Activated CD4-positive, alpha-beta T cell treated with anti-CD3 and anti-CD28 coated beads, Interleukin-2, amount 10 ng/mL, durations not matched to agents 24 days and 14 days (primary cell): ENCODE measurements at regions of chr5 and their contacts with region 1.

Region 1: GRCh38 chr5:66171349-66172344 is 27.5 kb downstream of the SREK1 start:
- DNase-seq: peak; percentile 84
- H3K4me3 Mint-ChIP-seq: no peak overlapping the region
- H3K27ac Mint-ChIP-seq: no peak overlapping the region
- H3K4me1 Mint-ChIP-seq: peaks cover 13% of the 10 kb centered on the region
- H3K27me3 Mint-ChIP-seq: no peaks in the 10 kb centered on the region

Region 2: GRCh38 chr5:65663804-65664521 is 507.7 kb before region 1 on chr5:
- intact Hi-C with region 1: no loop called
- DNase-seq: no peak
- H3K4me3 Mint-ChIP-seq: no peak overlapping the region
- H3K27ac Mint-ChIP-seq: no peak overlapping the region
- H3K4me1 Mint-ChIP-seq: no peaks in the 10 kb centered on the region
- H3K27me3 Mint-ChIP-seq: no peaks in the 10 kb centered on the region

Region 3: GRCh38 chr5:65774346-65774745 is 397.3 kb before region 1 on chr5:
- intact Hi-C with region 1: loop called (anchors 10 kb)
- DNase-seq: peak; percentile 65
- H3K4me3 Mint-ChIP-seq: no peak overlapping the region
- H3K27ac Mint-ChIP-seq: peak overlapping the region; percentile 1
- H3K4me1 Mint-ChIP-seq: peaks cover 19% of the 10 kb centered on the region
- H3K27me3 Mint-ChIP-seq: no peaks in the 10 kb centered on the region